HCT116 (cell line): ENCODE measurements at regions of chr6 and their contacts with region 1.

Region 1: GRCh38 chr6:39102071-39102820 is 12.7 kb downstream of the SAYSD1 start:
- DNase-seq: no peak
- ATAC-seq: peak; percentile 93
- H3K4me3 ChIP-seq: no peak overlapping the region
- H3K27ac ChIP-seq: no peak overlapping the region
- H3K4me1 ChIP-seq: no peaks in the 10 kb centered on the region
- H3K27me3 ChIP-seq: peaks cover 19% of the 10 kb centered on the region
- CTCF ChIP-seq: peak; percentile 27 to 53 (median 47); a peak in 5 of 6 replicates
- POLR2A ChIP-seq: no peak
- RAD21 ChIP-seq: peak; percentile 42

Region 2: GRCh38 chr6:37761554-37762263 is 1340.5 kb before region 1 on chr6:
- CTCF ChIA-PET with region 1: no interaction called
- POLR2A ChIA-PET with region 1: no interaction called
- RAD21 ChIA-PET with region 1: no interaction called
- intact Hi-C with region 1: no loop called
- DNase-seq: no peak
- ATAC-seq: no peak
- H3K4me3 ChIP-seq: no peak overlapping the region
- H3K27ac ChIP-seq: no peak overlapping the region
- H3K4me1 ChIP-seq: no peaks in the 10 kb centered on the region
- H3K27me3 ChIP-seq: 0 out of 2 replicates have a peak, but pooled peaks cover 3% of the 10 kb centered on the region
- CTCF ChIP-seq: no peak
- POLR2A ChIP-seq: no peak
- RAD21 ChIP-seq: no peak

Region 3: DNA sequence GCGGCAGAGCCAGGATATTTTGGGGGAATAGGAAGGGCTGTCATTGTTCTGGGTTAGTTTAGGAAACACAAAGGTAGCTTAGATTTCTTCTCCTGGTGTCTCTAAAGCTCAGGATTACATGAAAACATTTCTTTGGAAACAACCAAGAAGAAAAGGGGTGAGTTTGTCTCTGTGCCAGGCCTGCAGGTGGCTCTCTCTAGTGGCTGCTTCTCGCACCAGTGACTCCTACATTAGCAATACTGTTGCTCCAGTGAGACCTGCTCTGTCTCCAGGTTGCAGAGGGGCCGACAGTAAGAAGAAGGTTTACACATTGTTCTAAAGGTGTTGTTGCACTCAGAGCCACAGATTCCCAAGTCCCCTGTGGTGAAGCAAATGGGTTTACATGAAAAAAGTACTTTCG is 158.3 kb before region 1 on chr6:
- CTCF ChIA-PET with region 1: no interaction called
- POLR2A ChIA-PET with region 1: no interaction called
- RAD21 ChIA-PET with region 1: no interaction called
- intact Hi-C with region 1: no loop called
- DNase-seq: no peak
- ATAC-seq: peak; percentile 73; the same call in 1 of the 2 replicates
- H3K4me3 ChIP-seq: no peak overlapping the region
- H3K27ac ChIP-seq: no peak overlapping the region
- H3K4me1 ChIP-seq: no peaks in the 10 kb centered on the region
- H3K27me3 ChIP-seq: peaks cover 51% of the 10 kb centered on the region
- CTCF ChIP-seq: peak in 2 of 3 experiments; percentile 39 to 46; a peak in 4 of 6 replicates
- POLR2A ChIP-seq: no peak
- RAD21 ChIP-seq: no peak

Region 4: GRCh38 chr6:38973178-38974054 is 128.8 kb before region 1 on chr6:
- CTCF ChIA-PET with region 1: interaction called, 5 read pairs
- POLR2A ChIA-PET with region 1: no interaction called
- RAD21 ChIA-PET with region 1: no interaction called
- intact Hi-C with region 1: loop called (anchors 5 kb)
- DNase-seq: peak; percentile 72
- ATAC-seq: peak; percentile 96
- H3K4me3 ChIP-seq: no peak overlapping the region
- H3K27ac ChIP-seq: no peak overlapping the region
- H3K4me1 ChIP-seq: no peaks in the 10 kb centered on the region
- H3K27me3 ChIP-seq: peaks cover 70% of the 10 kb centered on the region
- CTCF ChIP-seq: peak; percentile 65 to 83 (median 77)
- POLR2A ChIP-seq: no peak
- RAD21 ChIP-seq: peak; percentile 67

Region 5: DNA sequence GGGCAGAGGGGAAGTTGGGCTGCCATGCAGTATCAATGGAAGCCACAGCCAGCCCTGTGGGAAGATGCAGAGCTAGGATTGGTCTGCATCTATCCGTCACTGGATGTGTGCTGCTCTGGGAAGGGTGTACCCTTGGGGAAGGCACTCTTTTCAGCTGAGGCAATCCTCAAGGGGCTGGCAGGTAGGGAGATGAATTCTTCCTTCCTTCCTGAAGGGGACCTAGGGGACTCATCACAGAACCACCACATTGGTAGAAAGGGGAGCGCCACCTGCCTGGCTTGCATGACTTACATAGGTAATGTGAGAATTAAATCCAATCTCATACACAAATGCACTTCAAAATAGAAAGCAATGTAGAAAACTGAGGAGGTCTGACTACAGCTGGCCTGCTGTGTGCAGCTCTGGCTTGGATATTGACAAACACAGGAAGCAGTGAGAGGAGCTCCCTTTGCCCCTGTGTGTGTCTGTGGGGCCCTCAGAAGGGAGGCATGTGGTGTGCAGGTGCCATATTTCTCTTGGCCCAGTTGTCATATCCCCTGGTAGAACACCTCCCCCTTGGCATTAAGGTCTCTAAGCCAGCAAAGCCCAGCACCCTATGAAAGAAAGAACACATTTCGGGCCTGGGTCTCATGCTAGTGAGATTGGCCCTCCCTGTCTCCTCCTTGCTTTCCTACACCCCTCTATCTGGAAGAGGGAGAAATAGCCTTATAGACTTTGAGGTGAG is 1092.4 kb after region 1 on chr6:
- CTCF ChIA-PET with region 1: no interaction called
- POLR2A ChIA-PET with region 1: no interaction called
- RAD21 ChIA-PET with region 1: no interaction called
- intact Hi-C with region 1: no loop called
- DNase-seq: no peak
- ATAC-seq: no peak
- H3K4me3 ChIP-seq: no peak overlapping the region
- H3K27ac ChIP-seq: no peak overlapping the region
- H3K4me1 ChIP-seq: no peaks in the 10 kb centered on the region
- H3K27me3 ChIP-seq: peaks cover 24% of the 10 kb centered on the region
- CTCF ChIP-seq: no peak
- POLR2A ChIP-seq: no peak
- RAD21 ChIP-seq: no peak